SK-N-SH (cell line): ENCODE measurements at regions of chr11 and their contacts with region 1.

Region 1: GRCh38 chr11:60831143-60831500 is 10.8 kb upstream of the CCDC86 start:
- DNase-seq: peak; percentile 80
- H3K4me3 ChIP-seq: peak overlapping the region in 1 of 2 experiments; percentile 6; a peak in 1 of 4 replicates
- H3K27ac ChIP-seq: no peak overlapping the region
- H3K4me1 ChIP-seq: peaks cover 0 to 16% of the 10 kb centered on the region in 2 experiments; a peak in 2 of 4 replicates
- H3K27me3 ChIP-seq: peaks cover 6% of the 10 kb centered on the region; the same call in 1 of the 2 replicates
- CTCF ChIP-seq: peak; percentile 91
- EP300 ChIP-seq: no peak
- RAD21 ChIP-seq: peak; percentile 93

Region 2: DNA sequence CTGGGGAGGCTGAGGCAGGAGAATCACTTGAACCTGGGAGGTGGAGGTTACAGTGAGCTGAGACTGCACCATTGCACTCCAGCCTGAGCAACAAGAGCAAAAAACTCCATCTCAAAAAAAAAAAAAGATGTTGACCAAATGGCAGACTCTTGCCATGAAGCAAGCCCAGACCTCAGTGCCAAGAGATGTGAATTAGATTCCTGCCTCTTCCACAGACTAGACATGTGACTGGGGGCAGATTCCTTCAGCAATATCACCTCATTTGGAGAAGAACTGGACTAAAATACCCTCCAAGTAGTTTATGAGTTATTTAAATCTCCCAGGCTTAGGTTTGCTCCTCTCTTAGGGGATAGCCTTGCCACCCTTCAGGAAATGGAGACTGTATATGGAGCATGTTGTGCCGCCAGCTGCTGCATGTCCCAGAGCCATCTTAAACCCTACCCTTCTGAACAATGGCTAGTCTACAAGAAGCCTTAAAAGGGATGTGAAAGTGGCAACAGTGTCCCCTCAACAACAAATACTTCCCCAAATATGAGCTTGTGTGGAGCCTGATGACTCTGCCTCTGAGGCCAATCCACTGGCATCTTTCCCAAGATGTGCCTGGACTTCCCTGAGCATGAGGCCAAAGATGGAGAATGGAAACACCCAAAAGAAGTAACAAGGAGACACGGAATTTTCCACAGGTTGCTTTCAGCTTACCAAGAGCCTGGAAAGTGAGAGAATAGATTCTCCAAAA is 453.6 kb before region 1 on chr11:
- CTCF ChIA-PET with region 1: no interaction called
- POLR2A ChIA-PET with region 1: no interaction called
- DNase-seq: no peak
- H3K4me3 ChIP-seq: no peak overlapping the region
- H3K27ac ChIP-seq: no peak overlapping the region
- H3K4me1 ChIP-seq: no peaks in the 10 kb centered on the region
- H3K27me3 ChIP-seq: no peaks in the 10 kb centered on the region; the same call in 1 of the 2 replicates
- CTCF ChIP-seq: no peak
- EP300 ChIP-seq: no peak
- RAD21 ChIP-seq: no peak

Region 3: GRCh38 chr11:60841797-60842667 is 10.9 kb after region 1 on chr11 and contains the start of gene CCDC86:
- CTCF ChIA-PET with region 1: interaction called, 18 read pairs
- POLR2A ChIA-PET with region 1: no interaction called
- DNase-seq: peak; percentile 99
- H3K4me3 ChIP-seq: peak within 1 kb of the TSS; percentile 85 to 98
- H3K27ac ChIP-seq: peak within 1 kb of the TSS; percentile 57 to 66; a peak in 3 of 4 replicates
- H3K4me1 ChIP-seq: peaks cover 0 to 34% of the 10 kb centered on the region in 2 experiments; a peak in 3 of 4 replicates
- H3K27me3 ChIP-seq: no peaks in the 10 kb centered on the region
- CTCF ChIP-seq: no peak
- EP300 ChIP-seq: 0 out of 4 replicates have a peak, but pooled peaks of 1 of the 2 experiments have one; percentile 14
- RAD21 ChIP-seq: no peak
- polyA plus RNA-seq, gene CCDC86: 26.1 and 34.7 TPM in 2 replicates

Region 4: GRCh38 chr11:60855726-60856633 is 24.9 kb after region 1 on chr11 and contains the start of gene PTGDR2:
- CTCF ChIA-PET with region 1: interaction called, 13 read pairs
- POLR2A ChIA-PET with region 1: no interaction called
- DNase-seq: peak; percentile 69
- H3K4me3 ChIP-seq: no peak within 1 kb of the TSS
- H3K27ac ChIP-seq: no peak within 1 kb of the TSS
- H3K4me1 ChIP-seq: no peaks in the 10 kb centered on the region
- H3K27me3 ChIP-seq: no peaks in the 10 kb centered on the region
- CTCF ChIP-seq: no peak
- EP300 ChIP-seq: no peak
- RAD21 ChIP-seq: no peak
- polyA plus RNA-seq, gene PTGDR2: 0.02 TPM in 1 of 2 replicates, not detected in the other

Region 5: DNA sequence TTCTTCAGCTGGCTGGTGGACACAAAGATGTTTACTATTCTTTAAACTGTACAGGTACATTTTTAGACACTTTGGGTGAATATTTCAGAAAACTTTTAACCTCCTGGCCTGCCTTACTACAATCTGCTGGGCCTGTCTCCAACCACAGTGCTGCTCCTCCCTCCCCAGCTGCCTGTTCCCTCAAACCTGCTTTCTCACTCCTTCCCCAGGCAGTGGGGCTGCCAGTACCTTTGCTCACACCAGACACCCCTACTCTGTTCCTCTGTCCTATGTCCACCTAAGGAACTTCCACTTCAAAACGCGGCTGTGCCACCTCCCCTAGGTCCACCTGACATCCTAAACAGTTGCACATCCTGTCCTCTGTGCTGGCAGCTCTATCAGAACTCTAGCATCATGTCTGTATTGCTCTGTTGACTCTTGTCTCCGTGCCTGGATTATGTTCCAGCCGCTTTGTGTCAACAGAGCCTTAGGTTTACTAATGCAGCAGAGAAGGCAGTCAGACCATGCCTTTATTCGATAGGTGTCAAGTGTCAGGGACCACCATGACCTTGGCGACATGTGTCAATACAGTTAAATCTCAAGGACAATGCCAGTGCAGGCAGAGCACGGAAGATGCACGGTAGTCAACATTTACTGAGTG is 49.6 kb after region 1 on chr11:
- CTCF ChIA-PET with region 1: interaction called, 550 read pairs
- POLR2A ChIA-PET with region 1: no interaction called
- DNase-seq: no peak
- H3K4me3 ChIP-seq: no peak overlapping the region
- H3K27ac ChIP-seq: no peak overlapping the region
- H3K4me1 ChIP-seq: no peaks in the 10 kb centered on the region
- H3K27me3 ChIP-seq: no peaks in the 10 kb centered on the region
- CTCF ChIP-seq: no peak
- EP300 ChIP-seq: no peak
- RAD21 ChIP-seq: no peak